CD4-positive, alpha-beta memory T cell (primary cell): ENCODE measurements at regions of chrX and their contacts with region 1.

Region 1: DNA sequence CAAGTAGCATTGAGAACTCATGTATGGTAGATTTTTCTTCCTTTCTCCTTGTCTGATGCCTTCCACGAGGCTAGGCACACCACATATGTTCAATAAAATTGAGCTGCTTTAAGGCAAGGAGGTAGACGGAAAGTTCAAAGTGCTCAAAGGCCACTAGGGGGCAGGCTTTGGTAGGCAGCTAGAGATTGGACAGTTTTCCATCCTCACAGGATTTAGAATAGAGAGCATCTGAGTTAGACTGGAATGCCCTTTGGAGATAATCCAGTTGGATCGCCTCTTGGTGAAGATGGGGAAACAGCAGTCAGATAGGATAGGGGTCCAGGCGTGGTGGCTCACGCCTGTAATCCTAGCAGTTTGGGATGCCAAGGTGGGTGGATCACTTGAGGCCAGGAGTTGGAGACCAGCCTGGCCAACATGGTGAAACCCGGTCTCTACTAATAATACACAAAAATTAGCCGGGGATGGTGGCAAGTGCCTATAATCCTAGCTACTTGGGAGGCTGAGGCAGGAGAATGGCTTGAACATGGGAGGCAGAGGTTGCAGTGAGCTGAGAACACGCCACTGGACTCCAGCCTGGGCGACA is 30.4 kb downstream of the ELF4 start:
- DNase-seq: peak; percentile 56 to 63 (median 57)
- H3K4me3 ChIP-seq: no peak overlapping the region
- H3K4me3 Mint-ChIP-seq: peak overlapping the region in 5 of 8 donors; percentile 7 to 58 (median 46)
- H3K27ac ChIP-seq: peak overlapping the region; percentile 9
- H3K27ac Mint-ChIP-seq: peak overlapping the region; percentile 49 to 93 (median 84)
- H3K4me1 ChIP-seq: peaks cover 55% of the 10 kb centered on the region
- H3K4me1 Mint-ChIP-seq: peaks cover 22 to 59% (median 43%) of the 10 kb centered on the region in 4 donors
- H3K27me3 ChIP-seq: no peaks in the 10 kb centered on the region
- H3K27me3 Mint-ChIP-seq: no peaks in the 10 kb centered on the region

Region 2: DNA sequence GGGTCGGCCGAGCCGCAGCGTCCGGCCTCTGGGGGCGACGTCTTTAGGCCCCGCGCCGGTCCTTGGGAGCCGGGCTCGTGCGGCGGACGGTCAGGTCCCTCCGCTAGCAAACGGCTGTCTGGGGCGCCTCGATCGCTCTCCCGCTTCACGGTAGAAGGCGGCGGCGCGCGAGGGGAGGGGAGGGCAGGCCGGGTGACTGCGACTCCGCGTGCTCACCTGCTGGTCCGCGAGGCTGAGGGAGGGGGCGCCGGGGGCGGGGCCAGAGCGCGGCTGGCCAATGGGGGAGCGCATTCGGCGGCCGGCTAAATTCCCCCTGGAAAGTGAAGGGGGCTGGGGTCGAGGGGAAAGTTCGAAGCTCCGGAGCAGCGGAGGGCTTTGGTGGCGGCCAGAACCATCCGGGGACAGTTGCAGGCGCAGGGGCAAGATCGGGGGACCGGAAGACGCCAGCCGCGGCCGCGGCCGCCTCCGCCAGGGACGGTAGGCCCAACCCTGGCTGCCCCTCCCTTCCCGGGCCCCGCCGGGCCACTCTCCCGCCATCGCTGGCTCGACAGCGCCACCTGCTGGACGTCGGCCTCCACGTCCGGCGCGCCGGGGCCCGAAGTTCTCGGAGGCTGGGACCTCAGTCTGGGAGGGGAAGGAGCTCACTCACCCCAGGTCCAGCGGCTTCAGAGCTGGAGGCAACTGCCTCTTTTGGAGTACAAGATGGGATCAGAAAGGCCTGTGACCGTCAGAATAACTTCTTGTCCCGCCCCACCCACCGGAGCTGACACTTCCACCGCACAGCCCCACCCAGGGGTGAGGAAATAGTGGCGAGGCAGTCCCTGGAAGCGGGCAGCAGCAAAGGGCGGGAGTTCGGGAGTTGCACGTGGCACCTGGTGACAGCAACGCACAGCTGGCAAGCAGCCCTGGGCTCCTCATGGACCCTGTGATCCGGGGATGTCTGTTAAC is 19.5 kb before region 1 on chrX:
- CTCF ChIA-PET with region 1: interaction called, 10 read pairs
- POLR2A ChIA-PET with region 1: interaction called, 3 read pairs
- intact Hi-C with region 1: no loop called
- DNase-seq: peak; percentile 71 to 79 (median 72)
- H3K4me3 ChIP-seq: peak overlapping the region in 1 of 2 donors; percentile 28
- H3K4me3 Mint-ChIP-seq: peak overlapping the region; percentile 65 to 82 (median 75)
- H3K27ac ChIP-seq: peak overlapping the region; percentile 39
- H3K27ac Mint-ChIP-seq: peak overlapping the region in 5 of 7 donors; percentile 27 to 70 (median 55)
- H3K4me1 ChIP-seq: peaks cover 7% of the 10 kb centered on the region
- H3K4me1 Mint-ChIP-seq: peaks cover 3 to 17% (median 11%) of the 10 kb centered on the region in 4 donors
- H3K27me3 ChIP-seq: no peaks in the 10 kb centered on the region
- H3K27me3 Mint-ChIP-seq: no peaks in the 10 kb centered on the region

Region 3: DNA sequence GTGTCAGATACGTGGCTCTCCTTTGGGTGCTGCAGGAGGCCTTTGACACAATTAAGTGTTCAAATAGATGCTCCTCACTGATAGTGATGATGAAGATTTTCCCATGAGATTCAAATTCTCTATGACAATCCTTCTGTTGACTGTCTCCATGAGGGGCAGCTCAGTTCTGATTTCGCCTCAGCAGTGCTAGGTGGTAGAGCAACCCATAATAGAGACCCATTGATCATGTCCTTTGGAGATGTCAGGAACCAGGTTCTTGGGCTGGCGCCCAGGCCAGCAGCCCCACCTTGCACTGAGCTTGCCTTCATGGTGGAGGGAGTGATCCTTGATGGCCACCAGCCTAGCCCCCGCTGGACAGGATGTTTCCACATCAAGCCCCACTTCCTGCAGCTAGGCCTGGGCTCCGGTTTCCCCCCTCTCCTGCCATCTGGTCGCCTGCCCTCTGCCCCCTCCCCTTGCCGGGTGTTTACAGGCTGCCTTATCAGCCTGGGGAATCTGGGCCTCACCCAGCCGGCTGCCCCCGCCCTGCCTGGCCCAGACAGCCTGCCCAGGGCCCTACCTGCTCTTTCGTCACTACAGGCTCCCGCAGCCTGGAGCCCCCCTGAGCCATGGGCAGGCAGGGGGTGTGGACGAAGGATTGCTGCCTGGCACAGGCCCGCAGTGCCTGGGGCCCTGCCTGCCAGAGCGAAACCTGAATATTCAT is 17.7 kb after region 1 on chrX:
- CTCF ChIA-PET with region 1: interaction called, 49 read pairs
- POLR2A ChIA-PET with region 1: interaction called, 28 read pairs
- intact Hi-C with region 1: loop called (anchors 1 kb)
- DNase-seq: peak; percentile 45 to 75 (median 47)
- H3K4me3 ChIP-seq: no peak overlapping the region
- H3K4me3 Mint-ChIP-seq: peak overlapping the region in 7 of 8 donors; percentile 59 to 77 (median 73)
- H3K27ac ChIP-seq: peak overlapping the region; percentile 40
- H3K27ac Mint-ChIP-seq: peak overlapping the region; percentile 83 to 94 (median 91)
- H3K4me1 ChIP-seq: peaks cover 92% of the 10 kb centered on the region
- H3K4me1 Mint-ChIP-seq: peaks cover 39 to 80% (median 60%) of the 10 kb centered on the region in 4 donors
- H3K27me3 ChIP-seq: no peaks in the 10 kb centered on the region
- H3K27me3 Mint-ChIP-seq: no peaks in the 10 kb centered on the region

Region 4: DNA sequence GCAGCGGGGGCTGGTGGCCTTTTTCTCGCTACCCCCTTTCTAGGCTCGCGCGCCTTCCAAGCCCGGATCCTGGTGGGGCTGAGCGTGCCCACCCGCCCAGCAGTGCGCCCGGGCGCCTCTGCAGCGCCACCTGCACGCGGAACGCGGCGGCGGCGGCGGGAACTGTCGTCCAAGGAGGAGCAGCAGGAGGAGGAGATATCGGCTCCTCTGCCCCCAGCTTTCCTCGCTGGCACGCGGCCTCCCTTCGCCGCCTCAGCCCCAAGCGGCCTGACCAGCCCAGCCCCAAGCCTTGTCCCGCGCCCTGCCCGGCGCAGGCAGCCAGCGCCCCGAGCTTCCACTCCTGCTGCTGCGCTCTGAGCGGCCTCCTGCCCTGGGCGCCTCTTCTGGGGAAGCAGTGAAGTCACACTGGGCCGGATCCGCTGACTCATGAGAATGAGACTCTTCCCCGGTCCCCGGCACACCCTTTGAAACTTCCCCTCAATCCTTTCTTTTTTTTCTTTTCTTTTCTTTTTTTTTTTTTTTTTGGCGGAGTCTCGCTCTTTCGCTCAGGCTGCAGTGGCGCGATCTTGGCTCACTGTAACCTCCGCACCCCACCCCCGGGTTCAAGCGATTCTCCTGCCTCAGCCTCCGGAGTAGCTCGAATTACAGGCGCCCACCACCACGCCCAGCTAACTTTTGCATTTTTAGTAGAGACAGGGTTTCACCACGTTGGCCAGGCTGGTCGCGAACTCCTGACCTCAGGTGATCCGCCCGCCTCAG is 41.0 kb after region 1 on chrX:
- CTCF ChIA-PET with region 1: interaction called, 163 read pairs
- POLR2A ChIA-PET with region 1: interaction called, 66 read pairs
- intact Hi-C with region 1: loop called (anchors 1 kb)
- DNase-seq: peak; percentile 64 to 76 (median 71)
- H3K4me3 ChIP-seq: peak overlapping the region in 1 of 2 donors; percentile 38
- H3K4me3 Mint-ChIP-seq: peak overlapping the region; percentile 55 to 80 (median 74)
- H3K27ac ChIP-seq: peak overlapping the region; percentile 21
- H3K27ac Mint-ChIP-seq: peak overlapping the region in 5 of 7 donors; percentile 41 to 63 (median 56)
- H3K4me1 ChIP-seq: peaks cover 21% of the 10 kb centered on the region
- H3K4me1 Mint-ChIP-seq: peaks cover 8 to 27% (median 19%) of the 10 kb centered on the region in 4 donors
- H3K27me3 ChIP-seq: no peaks in the 10 kb centered on the region
- H3K27me3 Mint-ChIP-seq: no peaks in the 10 kb centered on the region

Region 5: GRCh38 chrX:130173190-130173895 is 93.4 kb after region 1 on chrX:
- CTCF ChIA-PET with region 1: interaction called, 24 read pairs
- POLR2A ChIA-PET with region 1: interaction called, 9 read pairs
- intact Hi-C with region 1: loop called (anchors 2 kb)
- DNase-seq: no peak
- H3K4me3 ChIP-seq: peak overlapping the region; percentile 12 to 58
- H3K4me3 Mint-ChIP-seq: peak overlapping the region; percentile 87 to 93 (median 92)
- H3K27ac ChIP-seq: peak overlapping the region; percentile 61
- H3K27ac Mint-ChIP-seq: peak overlapping the region; percentile 63 to 93 (median 87)
- H3K4me1 ChIP-seq: peaks cover 39% of the 10 kb centered on the region
- H3K4me1 Mint-ChIP-seq: peaks cover 23 to 67% (median 32%) of the 10 kb centered on the region in 4 donors
- H3K27me3 ChIP-seq: no peaks in the 10 kb centered on the region
- H3K27me3 Mint-ChIP-seq: no peaks in the 10 kb centered on the region

Region 6: DNA sequence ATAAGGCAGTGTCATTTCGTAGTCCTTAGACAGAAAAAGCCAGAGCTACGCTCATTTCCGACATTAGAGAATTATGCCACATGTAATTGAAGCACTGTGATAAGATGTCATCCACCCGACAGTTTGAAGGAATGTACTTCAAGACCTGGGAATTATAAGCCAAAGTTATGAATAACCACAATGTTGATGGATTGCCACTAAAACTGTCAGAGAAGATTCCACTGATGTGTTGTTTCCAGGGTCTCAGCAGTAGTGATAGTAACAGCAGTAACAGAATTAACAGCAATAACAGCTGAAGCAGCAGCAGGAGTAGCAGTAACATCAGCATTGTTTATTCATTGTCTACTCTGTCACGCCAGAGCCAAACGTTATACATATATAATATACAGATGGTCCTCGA is 116.6 kb after region 1 on chrX:
- CTCF ChIA-PET with region 1: interaction called, 77 read pairs
- POLR2A ChIA-PET with region 1: interaction called, 3 read pairs
- intact Hi-C with region 1: loop called (anchors 1 kb)
- DNase-seq: no peak
- H3K4me3 ChIP-seq: no peak overlapping the region
- H3K4me3 Mint-ChIP-seq: no peak overlapping the region
- H3K27ac ChIP-seq: no peak overlapping the region
- H3K27ac Mint-ChIP-seq: no peak overlapping the region
- H3K4me1 ChIP-seq: peaks cover 5% of the 10 kb centered on the region
- H3K4me1 Mint-ChIP-seq: peaks cover 0 to 5% (median 2%) of the 10 kb centered on the region in 4 donors
- H3K27me3 ChIP-seq: no peaks in the 10 kb centered on the region
- H3K27me3 Mint-ChIP-seq: peaks cover 0 to 2% of the 10 kb centered on the region in 2 donors